Mammary epithelial cell (primary cell): ENCODE measurements at regions of chr16 and their contacts with region 1.

Region 1: GRCh38 chr16:72241930-72242329 is 70.0 kb upstream of the PMFBP1 start:
- DNase-seq: peak; percentile 48
- H3K4me3 ChIP-seq: no peak overlapping the region
- H3K27ac ChIP-seq: no peak overlapping the region
- H3K4me1 ChIP-seq: peaks cover 4% of the 10 kb centered on the region
- H3K27me3 ChIP-seq: no peaks in the 10 kb centered on the region
- CTCF ChIP-seq: peak; percentile 94 to 97

Region 2: GRCh38 chr16:72291531-72291981 is 49.6 kb after region 1 on chr16:
- CTCF ChIA-PET with region 1: interaction called, 6 read pairs
- dilution Hi-C with region 1: no loop called
- in situ Hi-C with region 1: no loop called
- intact Hi-C with region 1: loop called (anchors 2 kb)
- DNase-seq: peak; percentile 92
- H3K4me3 ChIP-seq: peak overlapping the region in 1 of 3 experiments; percentile 21
- H3K27ac ChIP-seq: peak overlapping the region; percentile 96
- H3K4me1 ChIP-seq: peaks cover 56% of the 10 kb centered on the region
- H3K27me3 ChIP-seq: no peaks in the 10 kb centered on the region
- CTCF ChIP-seq: no peak

Region 3: DNA sequence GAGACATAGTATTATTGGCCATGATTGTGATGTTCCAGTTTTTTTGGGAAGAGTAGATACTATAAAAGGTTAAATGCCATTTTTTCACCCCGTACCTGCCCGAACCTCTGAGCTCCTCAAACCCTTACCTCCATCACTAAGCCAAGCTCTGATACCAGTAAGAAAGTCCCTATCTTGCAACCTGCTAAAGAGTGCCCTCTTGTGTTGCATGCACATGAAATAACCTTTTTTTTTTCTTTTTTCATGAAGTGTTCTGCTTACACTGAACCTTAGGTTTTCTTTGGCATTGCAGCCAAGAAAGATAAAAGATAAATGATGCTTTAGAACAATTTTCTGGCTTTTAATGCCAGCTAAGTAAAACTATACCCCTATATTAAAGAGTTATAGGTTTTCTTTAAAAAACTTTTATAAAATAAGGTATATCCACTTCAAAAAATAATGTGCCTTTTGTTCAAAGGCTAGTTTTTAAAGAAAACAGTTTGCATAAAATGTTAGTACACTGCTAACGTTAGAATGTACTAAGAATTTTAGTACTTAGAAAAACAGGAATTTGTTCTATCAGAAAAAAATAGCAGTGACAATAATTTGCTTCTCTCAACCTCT is 225.3 kb after region 1 on chr16:
- CTCF ChIA-PET with region 1: no interaction called
- dilution Hi-C with region 1: no loop called
- in situ Hi-C with region 1: loop called (anchors 5 kb)
- intact Hi-C with region 1: loop called (anchors 1 kb)
- DNase-seq: peak; percentile 41
- H3K4me3 ChIP-seq: no peak overlapping the region
- H3K27ac ChIP-seq: no peak overlapping the region
- H3K4me1 ChIP-seq: no peaks in the 10 kb centered on the region
- H3K27me3 ChIP-seq: no peaks in the 10 kb centered on the region
- CTCF ChIP-seq: peak; percentile 68 to 81

Region 4: DNA sequence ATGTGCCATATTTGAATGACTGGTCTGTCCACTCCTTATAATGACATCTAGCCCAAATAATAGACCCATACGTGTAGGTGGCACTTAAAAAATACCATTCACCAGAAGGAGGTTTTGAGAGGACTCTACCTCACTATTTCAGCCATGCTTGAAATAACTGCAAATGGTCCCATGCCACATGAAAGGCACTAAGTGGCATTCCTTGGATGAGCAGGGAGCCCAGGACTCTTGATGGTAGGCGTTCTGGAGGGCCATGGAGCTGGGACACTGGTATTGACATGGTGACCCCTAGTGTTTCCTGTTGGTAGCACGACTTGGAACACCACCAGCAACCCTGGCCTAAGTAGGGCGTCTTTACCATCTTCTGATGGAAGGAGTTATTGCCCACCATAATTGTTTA is 954.7 kb after region 1 on chr16:
- CTCF ChIA-PET with region 1: no interaction called
- dilution Hi-C with region 1: no loop called
- in situ Hi-C with region 1: loop called (anchors 25 kb)
- intact Hi-C with region 1: loop called (anchors 1 kb)
- DNase-seq: peak; percentile 43
- H3K4me3 ChIP-seq: no peak overlapping the region
- H3K27ac ChIP-seq: no peak overlapping the region
- H3K4me1 ChIP-seq: no peaks in the 10 kb centered on the region
- H3K27me3 ChIP-seq: no peaks in the 10 kb centered on the region
- CTCF ChIP-seq: peak; percentile 81 to 87